ENCODE measurements at regions of chr2 and their contacts with region 1.

Region 1: GRCh38 chr2:128746356-128746755 is 427.7 kb upstream of the HS6ST1 start:
- DNase-seq: no peak
- ATAC-seq: no peak
- H3K4me3 ChIP-seq: no peak overlapping the region
- H3K27ac ChIP-seq: no peak overlapping the region
- H3K4me1 ChIP-seq: no peaks in the 10 kb centered on the region
- H3K27me3 ChIP-seq: peaks cover 55% of the 10 kb centered on the region
- CTCF ChIP-seq: no peak
- POLR2A ChIP-seq: no peak
- RAD21 ChIP-seq: no peak

Region 2: GRCh38 chr2:128329607-128330006 is 416.7 kb before region 1 on chr2:
- CTCF ChIA-PET with region 1: no interaction called
- POLR2A ChIA-PET with region 1: no interaction called
- RAD21 ChIA-PET with region 1: no interaction called
- intact Hi-C with region 1: loop called (anchors 10 kb)
- DNase-seq: no peak
- ATAC-seq: no peak
- H3K4me3 ChIP-seq: no peak overlapping the region
- H3K27ac ChIP-seq: no peak overlapping the region
- H3K4me1 ChIP-seq: no peaks in the 10 kb centered on the region
- H3K27me3 ChIP-seq: no peaks in the 10 kb centered on the region
- CTCF ChIP-seq: no peak
- POLR2A ChIP-seq: no peak
- RAD21 ChIP-seq: no peak

Region 3: GRCh38 chr2:128727914-128728313 is 18.4 kb before region 1 on chr2:
- CTCF ChIA-PET with region 1: no interaction called
- POLR2A ChIA-PET with region 1: no interaction called
- RAD21 ChIA-PET with region 1: no interaction called
- intact Hi-C with region 1: no loop called
- DNase-seq: no peak
- ATAC-seq: no peak
- H3K4me3 ChIP-seq: no peak overlapping the region
- H3K27ac ChIP-seq: no peak overlapping the region
- H3K4me1 ChIP-seq: no peaks in the 10 kb centered on the region
- H3K27me3 ChIP-seq: no peaks in the 10 kb centered on the region
- CTCF ChIP-seq: no peak
- POLR2A ChIP-seq: no peak
- RAD21 ChIP-seq: no peak

Region 4: DNA sequence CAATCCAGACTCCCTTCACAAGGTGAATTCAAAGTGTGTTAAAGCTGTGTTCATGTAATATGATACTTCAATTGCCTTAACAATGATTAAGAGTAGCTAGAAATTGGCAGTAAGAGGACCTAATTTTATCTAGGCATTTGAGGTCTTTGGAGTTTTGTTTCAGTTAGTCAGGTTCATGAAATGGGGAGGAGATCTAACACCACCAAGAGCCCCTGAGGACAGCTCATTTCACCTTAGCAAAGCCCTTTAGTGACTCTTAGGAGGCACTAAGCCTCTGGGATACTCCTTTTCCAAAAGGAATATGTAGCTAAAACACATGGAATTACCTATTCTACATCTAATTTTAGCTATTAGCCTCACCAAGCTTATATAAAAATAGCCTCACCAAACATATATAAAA is 516.6 kb after region 1 on chr2:
- CTCF ChIA-PET with region 1: no interaction called
- POLR2A ChIA-PET with region 1: no interaction called
- RAD21 ChIA-PET with region 1: no interaction called
- intact Hi-C with region 1: loop called (anchors 10 kb)
- DNase-seq: no peak
- ATAC-seq: no peak
- H3K4me3 ChIP-seq: no peak overlapping the region
- H3K27ac ChIP-seq: no peak overlapping the region
- H3K4me1 ChIP-seq: no peaks in the 10 kb centered on the region
- H3K27me3 ChIP-seq: no peaks in the 10 kb centered on the region
- CTCF ChIP-seq: no peak
- POLR2A ChIP-seq: no peak
- RAD21 ChIP-seq: no peak